Posterior vena cava (tissue), 2 donors: ENCODE measurements at regions of chr5 and their contacts with region 1.

Region 1: GRCh38 chr5:9743507-9743906 is 113.4 kb upstream of the TAS2R1 start:
- DNase-seq: no peak

Region 2: DNA sequence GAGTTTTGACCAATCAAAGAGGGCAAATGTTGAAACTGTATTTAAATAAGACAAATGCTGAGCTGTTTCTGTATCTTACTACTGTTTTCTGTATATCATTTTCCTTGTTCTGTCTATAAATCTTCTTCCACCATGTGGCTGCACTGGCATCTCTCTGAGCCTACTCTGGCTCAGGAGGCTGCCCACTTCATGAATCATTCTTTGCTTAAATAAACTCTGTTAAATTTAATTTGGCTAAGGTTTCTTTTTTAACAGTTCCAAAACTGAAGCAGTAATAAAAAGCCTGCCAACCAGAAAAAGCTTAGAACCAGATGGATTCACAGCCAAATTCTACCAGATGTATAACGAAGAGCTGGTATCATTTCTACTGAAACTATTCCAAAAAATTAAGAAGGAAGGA is 73.1 kb before region 1 on chr5:
- intact Hi-C with region 1: no loop called
- DNase-seq: no peak

Region 3: GRCh38 chr5:9766581-9766980 is 23.1 kb after region 1 on chr5:
- intact Hi-C with region 1: no loop called
- DNase-seq: no peak

Region 4: DNA sequence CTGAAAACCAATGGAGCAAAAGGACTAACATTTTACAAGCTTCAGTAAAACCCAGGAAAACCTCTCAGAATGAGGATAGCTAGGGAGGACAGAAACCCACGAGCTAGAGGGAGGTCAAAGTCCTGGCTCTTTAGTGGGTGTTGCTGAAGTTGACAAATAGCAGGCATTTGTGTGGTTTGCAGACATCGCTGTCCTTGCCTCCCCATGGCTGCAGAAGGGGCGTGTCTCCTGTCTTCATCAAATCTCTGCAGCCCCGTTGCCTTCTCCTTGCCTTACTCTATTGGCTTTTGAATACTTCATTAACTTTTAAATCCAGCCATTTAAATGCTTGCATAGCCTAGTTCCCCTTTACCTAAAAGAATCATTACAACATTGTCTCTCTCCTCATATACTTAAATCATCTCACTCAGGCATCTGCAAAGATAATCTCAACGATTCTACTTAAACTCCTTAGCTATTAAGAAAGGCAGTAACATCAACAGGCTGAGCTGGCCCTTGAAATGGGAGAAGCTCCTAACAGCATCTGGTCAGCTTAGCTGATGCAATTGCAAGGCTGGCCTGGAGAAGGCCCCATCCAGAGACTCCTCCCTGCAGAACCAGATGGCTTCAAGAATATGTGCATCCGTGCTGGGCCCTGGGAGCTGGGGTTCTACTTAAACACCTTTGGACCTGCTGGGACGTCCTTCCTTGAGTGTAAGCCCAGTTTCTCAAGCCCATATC is 39.5 kb after region 1 on chr5:
- intact Hi-C with region 1: no loop called
- DNase-seq: no peak

Region 5: GRCh38 chr5:10283927-10284635 is 540.6 kb after region 1 on chr5:
- intact Hi-C with region 1: no loop called
- DNase-seq: peak; percentile 96

Region 6: DNA sequence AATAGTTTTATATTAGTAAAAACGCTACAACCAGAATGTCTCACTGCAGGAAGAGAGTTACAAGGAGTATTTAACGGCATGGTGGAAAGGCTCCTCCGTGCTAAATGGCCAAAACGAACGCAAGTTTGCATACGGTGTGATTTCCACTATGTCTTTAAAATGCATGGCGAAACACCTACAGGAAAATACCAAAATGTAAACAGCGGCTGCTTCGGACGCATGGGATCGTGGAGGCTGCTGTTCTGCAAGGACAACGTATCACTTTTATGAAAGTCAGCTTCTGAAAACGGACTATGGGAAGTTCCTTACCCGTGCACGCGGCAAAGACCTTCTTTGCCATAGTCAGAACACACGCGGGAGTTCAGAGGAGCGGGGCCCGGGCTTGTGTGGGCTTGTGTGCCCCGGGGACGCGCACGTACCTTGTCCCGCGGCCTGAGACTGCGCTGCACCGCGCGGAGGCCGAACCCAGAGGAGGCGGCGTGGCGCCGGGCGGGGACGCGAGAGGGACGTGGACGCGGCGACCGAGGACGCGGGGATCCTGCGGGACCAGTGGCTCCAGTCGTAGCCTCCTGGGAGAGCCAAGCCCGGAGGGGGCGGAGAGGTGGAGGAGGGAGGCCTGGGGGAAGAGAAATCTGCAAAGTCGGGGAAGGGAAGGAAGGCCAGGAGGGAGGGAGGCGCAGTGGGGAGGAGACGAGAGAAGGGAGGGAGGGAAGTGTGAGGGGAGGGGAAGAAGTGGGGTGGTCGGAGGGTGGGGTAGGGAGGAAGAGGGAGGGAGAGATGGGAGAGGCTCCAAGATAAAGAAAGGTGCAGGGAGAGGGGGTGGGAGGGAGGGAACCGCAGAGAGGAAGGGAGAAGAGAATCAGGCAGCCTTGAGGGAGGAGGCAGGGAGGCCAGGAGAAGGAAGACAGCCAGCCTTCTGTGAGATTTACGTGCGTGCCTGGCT is 564.0 kb after region 1 on chr5 and contains the start of gene CMBL:
- intact Hi-C with region 1: loop called in 1 of 2 experiments (anchors 5 kb)
- DNase-seq: peak; percentile 86
- total RNA-seq, gene CMBL: 11.8 to 20.4 TPM